Heart left ventricle (tissue), 16 donors: ENCODE measurements at regions of chr14 and their contacts with region 1.

Region 1: DNA sequence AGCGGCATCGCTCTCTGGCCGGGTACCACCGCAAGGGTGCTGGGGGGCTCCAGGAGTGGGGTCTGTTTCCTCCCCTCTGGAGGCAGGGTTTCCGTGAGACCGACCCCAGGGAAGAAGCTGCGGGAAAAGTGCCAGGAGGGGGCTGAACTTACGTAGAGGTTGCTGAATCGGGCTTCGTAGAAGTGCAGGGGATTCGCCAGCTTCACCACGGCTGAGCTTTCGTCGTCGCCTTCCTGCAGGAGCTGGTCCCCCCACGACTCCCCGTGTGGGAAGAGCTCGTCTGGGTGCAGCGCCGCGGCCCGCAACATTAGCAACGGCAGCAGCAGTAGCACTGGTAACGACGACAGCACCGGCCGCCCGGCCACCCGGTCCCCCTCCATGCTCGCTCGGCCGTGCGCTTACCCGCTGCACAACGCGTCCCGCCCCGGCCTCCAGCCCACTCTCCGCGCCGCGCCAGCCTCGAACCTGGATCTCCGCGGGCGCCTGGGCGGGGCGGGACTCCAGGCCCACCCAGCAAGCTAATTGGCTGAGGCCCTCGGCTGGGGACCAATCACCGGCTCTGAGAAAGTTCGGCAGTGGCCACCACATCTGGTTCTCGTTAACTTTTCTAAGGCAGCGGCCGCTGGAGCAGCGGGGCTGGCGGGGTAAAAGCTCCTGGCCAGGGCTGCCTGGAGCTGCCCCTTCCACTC is at the start of gene NID2:
- DNase-seq: peak; percentile 91 to 95 (median 93)
- ATAC-seq: peak; percentile 91 to 94 (median 92)
- H3K4me3 ChIP-seq: peak within 1 kb of the TSS; percentile 64 to 89 (median 74)
- H3K27ac ChIP-seq: peak within 1 kb of the TSS; percentile 51 to 97 (median 89)
- H3K4me1 ChIP-seq: peaks cover 0 to 61% (median 33%) of the 10 kb centered on the region in 12 donors
- H3K27me3 ChIP-seq: peaks cover 0 to 45% (median 0%) of the 10 kb centered on the region in 9 donors
- CTCF ChIP-seq: peak in 3 of 12 donors; percentile 6 to 32 (median 19)
- POLR2A ChIP-seq: peak; percentile 5 to 91
- total RNA-seq, gene NID2: 32.0 to 77.4 (median 40.9) TPM

Region 2: DNA sequence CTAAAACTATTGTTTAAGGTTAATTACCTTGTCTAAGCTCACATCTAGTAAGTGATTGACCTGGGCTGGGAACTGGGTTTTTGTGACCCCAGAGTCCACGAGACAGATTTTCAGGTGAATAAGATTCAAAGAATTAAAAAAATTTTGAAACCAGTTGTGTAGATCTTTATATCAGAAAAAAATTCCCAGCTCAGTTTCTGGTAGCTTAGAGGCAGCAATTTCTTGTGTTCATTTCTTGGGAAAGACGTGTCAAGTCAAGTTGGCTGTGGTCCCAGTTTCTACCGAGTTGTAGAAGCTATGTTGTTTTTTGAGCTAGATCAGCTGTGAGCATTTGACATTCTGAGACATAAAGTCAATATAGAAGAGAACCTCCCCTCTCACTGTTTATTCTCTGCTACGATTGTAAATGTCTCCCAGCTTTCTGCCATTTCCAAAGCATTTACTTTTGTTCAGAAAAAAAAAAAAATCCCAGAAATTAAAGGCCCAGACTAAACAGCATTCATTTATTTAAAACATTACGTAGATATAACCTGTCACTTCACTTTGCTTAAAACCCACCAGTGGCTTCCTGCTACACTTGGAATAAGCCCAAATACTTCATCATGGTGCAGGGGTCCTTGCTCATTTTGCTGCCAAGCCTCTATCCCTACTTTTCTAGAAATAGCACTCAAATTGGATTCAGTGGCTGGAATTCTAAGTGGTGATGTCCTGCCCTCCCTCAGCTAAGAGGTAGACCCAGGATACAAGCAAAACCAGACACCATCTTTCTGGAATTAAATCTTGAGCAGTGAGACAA is 1104.0 kb before region 1 on chr14:
- intact Hi-C with region 1: no loop called
- DNase-seq: peak in 3 of 5 donors; percentile 42 to 60 (median 44)
- ATAC-seq: no peak
- H3K4me3 ChIP-seq: no peak overlapping the region
- H3K27ac ChIP-seq: peak overlapping the region in 1 of 12 donors; percentile 48
- H3K4me1 ChIP-seq: peaks cover 0 to 35% (median 0%) of the 10 kb centered on the region in 12 donors
- H3K27me3 ChIP-seq: no peaks in the 10 kb centered on the region
- CTCF ChIP-seq: no peak
- POLR2A ChIP-seq: no peak

Region 3: GRCh38 chr14:51996148-51996746 is 72.5 kb before region 1 on chr14:
- intact Hi-C with region 1: loop called in 8 of 10 experiments (anchors 5 kb)
- DNase-seq: no peak
- ATAC-seq: no peak
- H3K4me3 ChIP-seq: no peak overlapping the region
- H3K27ac ChIP-seq: no peak overlapping the region
- H3K4me1 ChIP-seq: peaks cover 0 to 57% (median 26%) of the 10 kb centered on the region in 12 donors
- H3K27me3 ChIP-seq: no peaks in the 10 kb centered on the region
- CTCF ChIP-seq: peak; percentile 72 to 94 (median 79)
- POLR2A ChIP-seq: no peak

Region 4: DNA sequence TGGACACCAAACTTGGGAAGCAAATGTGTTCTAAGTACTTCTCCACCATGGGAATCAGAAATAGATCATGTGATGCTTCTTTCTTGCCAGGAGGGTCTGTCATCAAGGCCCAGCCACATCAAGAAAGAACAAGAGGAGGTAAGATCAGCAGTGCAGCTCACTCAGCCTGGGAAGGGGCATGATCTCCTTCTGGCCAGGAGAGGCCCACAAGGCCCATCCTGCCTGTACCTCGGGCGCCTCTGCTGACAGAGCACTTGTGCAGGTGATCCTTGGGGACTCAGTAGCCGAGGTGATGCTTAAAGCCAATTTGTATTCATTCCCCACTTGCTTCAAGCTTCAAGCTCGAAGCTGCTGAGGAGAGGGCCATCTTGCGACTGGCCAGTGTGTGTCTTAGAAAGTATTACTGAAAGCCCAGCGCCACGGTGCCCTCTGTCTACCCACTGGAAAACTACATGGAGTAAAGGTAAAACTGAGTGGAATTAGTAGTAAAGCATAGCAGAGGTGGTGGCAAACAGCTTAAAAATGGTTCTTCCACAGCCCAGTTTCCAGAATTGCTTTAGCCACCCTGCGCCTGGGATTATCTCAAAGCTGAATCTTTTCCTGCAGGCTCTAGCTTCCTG is 53.2 kb before region 1 on chr14:
- intact Hi-C with region 1: loop called (anchors 2 to 5 kb)
- DNase-seq: peak in 2 of 5 donors; percentile 30 to 51
- ATAC-seq: peak; percentile 20 to 52 (median 40)
- H3K4me3 ChIP-seq: no peak overlapping the region
- H3K27ac ChIP-seq: peak overlapping the region; percentile 43 to 86 (median 76)
- H3K4me1 ChIP-seq: peaks cover 22 to 98% (median 76%) of the 10 kb centered on the region in 12 donors
- H3K27me3 ChIP-seq: no peaks in the 10 kb centered on the region
- CTCF ChIP-seq: peak; percentile 25 to 64 (median 49)
- POLR2A ChIP-seq: no peak

Region 5: DNA sequence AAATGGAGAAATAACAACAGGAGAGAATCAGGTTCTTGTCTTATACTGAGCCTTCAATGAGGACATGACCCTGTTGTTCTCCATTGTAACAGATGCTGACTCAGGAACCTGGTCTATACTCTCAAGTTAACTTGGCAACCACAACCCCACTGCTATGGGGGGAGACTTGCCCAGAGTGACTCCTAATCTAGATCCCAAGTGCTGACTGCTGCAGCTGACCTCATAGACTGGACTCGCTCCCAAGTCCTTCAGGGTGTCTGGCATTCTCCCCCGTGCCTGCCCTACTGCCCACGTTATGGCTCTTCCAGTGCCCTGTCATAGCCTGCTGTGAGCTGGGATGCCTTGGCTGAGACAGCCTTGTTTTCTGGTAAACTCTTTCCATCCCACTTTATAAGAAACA is 37.0 kb before region 1 on chr14:
- intact Hi-C with region 1: loop called in 1 of 10 experiments (anchors 5 kb)
- DNase-seq: peak; percentile 70 to 93 (median 78)
- ATAC-seq: peak; percentile 96 to 98 (median 96)
- H3K4me3 ChIP-seq: no peak overlapping the region
- H3K27ac ChIP-seq: peak overlapping the region; percentile 21 to 81 (median 66)
- H3K4me1 ChIP-seq: peaks cover 0 to 51% (median 36%) of the 10 kb centered on the region in 12 donors
- H3K27me3 ChIP-seq: no peaks in the 10 kb centered on the region
- CTCF ChIP-seq: no peak
- POLR2A ChIP-seq: no peak

Region 6: DNA sequence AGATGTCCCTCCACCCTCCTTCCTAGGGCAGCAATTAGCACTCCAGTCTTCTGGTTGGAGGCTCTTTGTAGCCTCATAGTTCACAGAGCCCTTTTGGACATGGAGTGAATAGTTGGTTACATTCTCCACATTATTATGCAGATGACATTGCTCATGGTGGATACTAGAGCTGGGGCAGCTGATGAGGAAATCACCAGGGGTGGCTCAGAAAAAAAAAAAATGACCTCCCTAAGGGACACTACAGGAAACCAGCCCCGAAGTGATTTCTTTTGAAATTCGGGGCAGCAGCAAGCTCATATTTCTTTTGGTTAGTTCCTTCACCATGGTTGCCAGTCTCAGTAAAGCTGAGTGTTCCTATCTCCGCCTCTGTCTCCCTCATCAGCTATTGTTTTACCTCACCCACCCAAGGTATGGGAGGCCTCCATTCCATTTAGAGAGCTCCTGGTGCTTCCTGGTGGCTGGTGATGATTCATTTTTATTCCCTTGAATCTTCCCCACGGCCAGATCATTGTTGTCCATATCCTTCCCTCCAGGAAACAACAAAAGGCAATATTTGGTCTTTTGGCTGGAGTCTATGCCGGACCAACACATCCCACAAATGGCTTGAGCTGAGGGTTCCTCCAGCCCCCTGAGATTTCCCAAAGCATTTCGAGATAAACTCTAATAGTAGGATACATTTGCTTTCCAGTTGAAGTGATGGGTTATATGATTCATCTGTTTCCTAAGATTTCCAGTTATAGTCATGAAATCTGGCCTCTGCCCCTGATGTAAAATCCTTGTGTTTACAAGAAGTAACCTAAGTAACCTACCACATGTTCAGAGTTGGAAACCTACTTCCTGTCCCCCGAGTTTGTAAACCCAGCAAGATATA is 56.3 kb after region 1 on chr14:
- intact Hi-C with region 1: loop called in 7 of 10 experiments (anchors 2 to 10 kb)
- DNase-seq: peak in 4 of 5 donors; percentile 26 to 40 (median 38)
- ATAC-seq: peak; percentile 26 to 87 (median 79)
- H3K4me3 ChIP-seq: peak overlapping the region in 1 of 12 donors; percentile 15
- H3K27ac ChIP-seq: peak overlapping the region in 10 of 12 donors; percentile 6 to 74 (median 62)
- H3K4me1 ChIP-seq: peaks cover 0 to 28% (median 14%) of the 10 kb centered on the region in 12 donors
- H3K27me3 ChIP-seq: no peaks in the 10 kb centered on the region
- CTCF ChIP-seq: no peak
- POLR2A ChIP-seq: no peak

Region 7: GRCh38 chr14:52325126-52325525 is 256.4 kb after region 1 on chr14:
- intact Hi-C with region 1: no loop called
- DNase-seq: no peak
- ATAC-seq: peak in 3 of 4 donors; percentile 39 to 79 (median 49)
- H3K4me3 ChIP-seq: peak overlapping the region in 1 of 12 donors; percentile 18
- H3K27ac ChIP-seq: peak overlapping the region in 1 of 12 donors; percentile 61
- H3K4me1 ChIP-seq: peaks cover 0 to 49% (median 0%) of the 10 kb centered on the region in 12 donors
- H3K27me3 ChIP-seq: no peaks in the 10 kb centered on the region
- CTCF ChIP-seq: no peak
- POLR2A ChIP-seq: no peak

Region 8: DNA sequence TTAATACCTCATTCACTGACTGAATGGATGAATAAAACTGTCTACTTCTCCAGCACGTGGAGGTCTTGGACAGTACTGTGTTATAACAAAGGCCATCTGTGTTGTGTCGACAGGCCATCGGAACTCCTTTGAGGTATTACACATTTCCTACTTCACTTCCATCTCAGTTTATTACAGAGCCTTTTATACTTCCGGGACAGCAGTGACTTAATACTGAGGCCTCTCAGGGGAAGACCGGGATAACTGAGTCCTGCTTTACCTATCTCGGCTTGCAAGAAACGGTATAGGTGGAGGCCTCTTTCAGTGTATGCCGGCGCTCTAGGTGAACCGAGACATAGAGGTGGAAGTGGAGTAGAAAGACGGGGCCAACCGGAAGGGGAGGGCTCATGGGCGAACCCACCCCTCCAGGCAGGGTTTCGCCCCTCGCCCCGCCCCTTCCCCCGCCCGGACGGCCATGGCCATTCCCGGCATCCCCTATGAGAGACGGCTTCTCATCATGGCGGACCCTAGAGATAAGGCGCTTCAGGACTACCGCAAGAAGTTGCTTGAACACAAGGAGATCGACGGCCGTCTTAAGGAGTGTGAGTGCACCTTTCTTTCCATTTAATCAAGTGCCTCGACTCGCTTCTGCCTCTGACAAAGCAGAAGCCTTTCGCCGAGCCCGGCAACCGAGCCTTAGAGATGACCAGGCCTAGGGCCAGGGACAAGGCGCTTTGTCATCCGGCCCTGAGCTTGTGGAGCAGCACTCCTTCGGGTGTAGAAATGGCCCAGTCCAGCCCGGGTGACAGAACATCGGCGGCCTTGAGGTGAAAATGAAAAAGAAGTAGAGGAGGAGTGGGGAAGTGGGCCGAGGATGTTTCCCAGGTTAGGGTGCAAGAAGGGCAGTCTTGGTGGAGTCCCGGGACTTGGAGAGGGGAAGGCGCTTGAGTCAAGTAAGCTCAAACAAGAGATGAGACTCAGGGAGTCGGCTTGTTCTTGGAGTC is 638.3 kb after region 1 on chr14 and contains the start of gene PSMC6:
- intact Hi-C with region 1: loop called in 1 of 10 experiments (anchors 10 kb)
- DNase-seq: peak; percentile 96 to 97 (median 96)
- ATAC-seq: peak; percentile 99 to 100 (median 100)
- H3K4me3 ChIP-seq: peak within 1 kb of the TSS; percentile 61 to 91 (median 80)
- H3K27ac ChIP-seq: peak within 1 kb of the TSS; percentile 68 to 93 (median 90)
- H3K4me1 ChIP-seq: peaks cover 0 to 43% (median 20%) of the 10 kb centered on the region in 12 donors
- H3K27me3 ChIP-seq: no peaks in the 10 kb centered on the region
- CTCF ChIP-seq: no peak
- POLR2A ChIP-seq: peak in 1 of 2 donors; percentile 58
- total RNA-seq, gene PSMC6: 74.3 to 90.7 (median 81.4) TPM

Region 9: GRCh38 chr14:52801015-52801712 is 732.4 kb after region 1 on chr14:
- intact Hi-C with region 1: no loop called
- DNase-seq: peak in 1 of 5 donors; percentile 35
- ATAC-seq: peak in 3 of 4 donors; percentile 62 to 93 (median 81)
- H3K4me3 ChIP-seq: no peak overlapping the region
- H3K27ac ChIP-seq: peak overlapping the region in 6 of 12 donors; percentile 2 to 30 (median 8)
- H3K4me1 ChIP-seq: peaks cover 0 to 10% (median 0%) of the 10 kb centered on the region in 12 donors
- H3K27me3 ChIP-seq: no peaks in the 10 kb centered on the region
- CTCF ChIP-seq: no peak
- POLR2A ChIP-seq: no peak